ENCODE measurements at regions of chr6 and their contacts with region 1.

Region 1: DNA sequence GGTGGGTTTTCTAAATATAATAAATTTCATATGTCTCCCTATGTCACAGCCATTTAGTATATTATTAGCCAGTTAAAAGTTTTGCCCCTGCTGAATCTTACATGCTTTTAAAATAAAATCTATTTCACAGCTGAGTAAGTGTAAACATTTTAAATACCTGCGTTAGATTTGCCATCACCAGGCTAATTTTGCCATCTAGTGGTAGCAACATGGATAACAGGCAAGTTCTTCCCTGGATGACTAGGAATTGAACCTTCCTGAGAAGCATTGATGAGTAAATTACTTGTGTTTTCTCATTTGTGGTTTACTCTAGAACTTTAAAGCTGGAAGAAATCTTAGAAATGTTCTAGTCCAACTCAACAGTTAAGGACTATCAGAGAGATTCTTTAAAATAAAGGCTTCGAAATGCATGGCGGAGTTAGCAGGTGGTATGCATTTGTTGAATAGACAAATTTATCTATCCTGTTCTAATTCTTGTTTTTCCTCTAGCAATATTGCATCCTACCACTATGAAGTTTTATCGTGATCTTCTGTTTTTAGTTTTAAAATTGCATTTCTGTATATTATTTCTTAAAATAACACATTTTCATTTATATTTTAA is 2.6 kb downstream of the PRSS35 start:
- DNase-seq: no peak
- ATAC-seq: peak in 1 of 2 donors; percentile 44
- H3K4me3 ChIP-seq: no peak overlapping the region
- H3K27ac ChIP-seq: no peak overlapping the region
- H3K4me1 ChIP-seq: peaks cover 11 to 16% of the 10 kb centered on the region in 2 donors
- H3K27me3 ChIP-seq: no peaks in the 10 kb centered on the region
- CTCF ChIP-seq: peak; percentile 60 to 79 (median 74)
- POLR2A ChIP-seq: no peak

Region 2: GRCh38 chr6:83221889-83222479 is 293.0 kb before region 1 on chr6:
- in situ Hi-C with region 1: loop called (anchors 5 to 10 kb)
- intact Hi-C with region 1: loop called (anchors 1 kb)
- DNase-seq: no peak
- ATAC-seq: no peak
- H3K4me3 ChIP-seq: no peak overlapping the region
- H3K27ac ChIP-seq: no peak overlapping the region
- H3K4me1 ChIP-seq: peaks cover 7% of the 10 kb centered on the region in 2 donors
- H3K27me3 ChIP-seq: no peaks in the 10 kb centered on the region
- CTCF ChIP-seq: peak in 4 of 5 experiments; percentile 24 to 48 (median 32)
- POLR2A ChIP-seq: no peak

Region 3: DNA sequence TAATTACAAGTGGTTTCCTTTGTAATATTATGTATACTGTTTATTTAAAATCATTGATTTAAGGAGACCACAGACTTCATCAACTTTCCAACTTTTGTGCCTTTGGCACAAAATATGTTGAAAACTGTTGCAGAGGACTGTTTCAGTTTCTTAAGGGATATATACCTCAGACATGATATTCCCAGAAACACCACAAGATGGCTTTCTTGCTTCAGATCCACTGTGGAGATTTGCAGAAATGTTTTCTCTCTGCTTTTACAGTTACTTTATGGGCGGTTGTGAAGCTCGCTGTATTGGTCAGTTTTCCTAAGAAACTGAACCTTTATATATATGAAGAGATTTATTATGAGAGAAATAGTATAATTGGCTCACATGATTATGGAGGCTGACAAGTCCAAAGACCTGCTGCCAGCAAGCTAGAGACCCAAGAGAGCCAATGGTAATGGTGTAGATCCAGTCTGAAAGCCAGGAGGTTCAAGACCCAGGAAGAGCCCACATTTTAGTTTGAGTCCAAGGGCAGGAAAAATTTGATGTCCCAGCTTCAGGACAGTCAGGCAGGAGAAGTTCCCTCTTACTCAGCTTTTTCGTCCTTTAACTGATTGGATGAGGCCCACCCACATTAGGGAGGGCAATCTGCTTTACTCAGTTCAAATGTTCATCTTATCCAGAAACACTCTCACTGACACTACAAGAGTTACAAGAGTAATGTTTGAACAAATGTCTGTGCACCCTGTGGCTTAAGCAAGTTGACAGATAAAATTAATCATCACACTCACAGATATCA is 96.9 kb before region 1 on chr6:
- in situ Hi-C with region 1: loop called (anchors 5 to 10 kb)
- intact Hi-C with region 1: loop called (anchors 1 kb)
- DNase-seq: no peak
- ATAC-seq: peak; percentile 54 to 68
- H3K4me3 ChIP-seq: no peak overlapping the region
- H3K27ac ChIP-seq: no peak overlapping the region
- H3K4me1 ChIP-seq: peaks cover 0 to 6% of the 10 kb centered on the region in 2 donors
- H3K27me3 ChIP-seq: no peaks in the 10 kb centered on the region
- CTCF ChIP-seq: peak in 4 of 5 experiments; percentile 32 to 53 (median 48)
- POLR2A ChIP-seq: no peak

Region 4: GRCh38 chr6:83430611-83431563 is 84.1 kb before region 1 on chr6 and contains the start of gene ME1:
- in situ Hi-C with region 1: no loop called
- intact Hi-C with region 1: loop called (anchors 5 kb)
- DNase-seq: peak; percentile 67 to 80
- ATAC-seq: peak; percentile 83
- H3K4me3 ChIP-seq: peak within 1 kb of the TSS; percentile 64 to 76 (median 70)
- H3K27ac ChIP-seq: peak within 1 kb of the TSS; percentile 82 to 91 (median 85)
- H3K4me1 ChIP-seq: peaks cover 11 to 18% of the 10 kb centered on the region in 2 donors
- H3K27me3 ChIP-seq: no peaks in the 10 kb centered on the region
- CTCF ChIP-seq: no peak
- POLR2A ChIP-seq: peak; percentile 35 to 38
- total RNA-seq, gene ME1: 15.6 to 36.8 (median 25.4) TPM

Measured in gastrocnemius medialis (tissue), 4 donors.